ENCODE measurements at regions of chr1 and their contacts with region 1.

Region 1: DNA sequence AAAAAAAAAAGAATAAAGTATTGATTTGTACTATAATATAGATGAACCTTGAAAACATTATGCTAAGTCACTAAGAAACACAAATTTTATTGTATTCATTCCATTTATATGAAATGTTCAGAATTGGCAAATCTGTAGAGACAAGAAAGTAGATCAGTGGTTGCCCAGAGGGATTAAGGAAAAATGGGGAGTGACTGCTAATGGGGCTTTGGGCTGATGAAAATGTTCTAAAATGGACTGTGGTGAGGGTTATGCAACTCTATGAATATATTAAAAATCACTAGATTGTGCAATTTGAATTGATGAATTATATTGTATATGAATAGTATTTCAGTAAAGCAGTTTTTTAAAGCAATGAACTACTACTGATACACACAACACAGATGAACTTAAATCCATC is 10.0 kb downstream of the GDAP2 start:
- DNase-seq: no peak

Region 2: GRCh38 chr1:117857434-117857833 is 61.9 kb before region 1 on chr1:
- intact Hi-C with region 1: loop called (anchors 10 kb)
- DNase-seq: no peak